ENCODE measurements at regions of chr14 and their contacts with region 1.

Region 1: DNA sequence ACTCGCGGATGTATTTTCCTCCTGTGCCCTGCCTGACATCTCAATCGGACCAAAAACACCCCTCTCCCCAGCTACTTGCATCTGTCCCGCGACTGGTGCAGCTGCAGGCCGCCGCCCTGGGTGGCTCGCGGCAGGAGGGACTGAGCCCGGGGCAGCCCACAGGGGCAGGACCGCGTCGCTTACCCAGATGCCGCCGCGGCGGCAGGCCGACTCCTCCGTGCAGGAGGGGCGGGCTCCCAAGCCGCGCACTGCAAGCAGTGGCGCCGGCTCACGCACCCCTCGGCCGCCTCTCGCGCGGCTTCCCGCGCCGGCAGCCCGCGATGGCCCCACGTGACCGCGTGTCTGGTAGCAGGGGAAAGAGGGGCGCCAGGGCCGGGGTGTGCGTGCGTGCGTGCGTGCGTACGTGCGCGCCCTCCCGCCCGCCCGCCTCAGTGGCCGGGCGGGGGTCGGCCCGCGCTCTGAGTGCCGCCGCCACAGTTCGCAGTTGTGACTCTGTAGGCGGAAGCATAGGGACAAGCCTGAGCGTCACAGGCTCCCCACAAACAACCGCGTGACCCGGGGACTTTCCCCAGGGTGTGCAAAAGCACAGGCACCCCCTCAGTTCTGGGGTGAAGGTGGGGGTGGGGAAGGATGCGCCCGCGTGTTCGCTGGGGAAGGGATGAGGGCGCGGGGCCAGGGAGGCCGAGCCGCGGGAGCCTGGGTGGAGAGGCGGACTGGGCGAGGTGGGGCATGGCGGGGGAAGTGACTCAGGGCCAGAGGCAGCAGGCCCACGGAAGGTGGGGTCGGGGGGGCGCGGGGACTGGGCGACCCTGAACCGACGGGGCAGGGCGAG is at the start of gene ZBTB25:
- DNase-seq: no peak
- ATAC-seq: peak; percentile 83
- H3K4me3 ChIP-seq: peak within 1 kb of the TSS; percentile 83 to 94
- H3K27ac ChIP-seq: peak within 1 kb of the TSS; percentile 94
- H3K4me1 ChIP-seq: peaks cover 35% of the 10 kb centered on the region
- H3K27me3 ChIP-seq: no peaks in the 10 kb centered on the region
- CTCF ChIP-seq: no peak
- total RNA-seq, gene ZBTB25: 9.0 TPM

Region 2: DNA sequence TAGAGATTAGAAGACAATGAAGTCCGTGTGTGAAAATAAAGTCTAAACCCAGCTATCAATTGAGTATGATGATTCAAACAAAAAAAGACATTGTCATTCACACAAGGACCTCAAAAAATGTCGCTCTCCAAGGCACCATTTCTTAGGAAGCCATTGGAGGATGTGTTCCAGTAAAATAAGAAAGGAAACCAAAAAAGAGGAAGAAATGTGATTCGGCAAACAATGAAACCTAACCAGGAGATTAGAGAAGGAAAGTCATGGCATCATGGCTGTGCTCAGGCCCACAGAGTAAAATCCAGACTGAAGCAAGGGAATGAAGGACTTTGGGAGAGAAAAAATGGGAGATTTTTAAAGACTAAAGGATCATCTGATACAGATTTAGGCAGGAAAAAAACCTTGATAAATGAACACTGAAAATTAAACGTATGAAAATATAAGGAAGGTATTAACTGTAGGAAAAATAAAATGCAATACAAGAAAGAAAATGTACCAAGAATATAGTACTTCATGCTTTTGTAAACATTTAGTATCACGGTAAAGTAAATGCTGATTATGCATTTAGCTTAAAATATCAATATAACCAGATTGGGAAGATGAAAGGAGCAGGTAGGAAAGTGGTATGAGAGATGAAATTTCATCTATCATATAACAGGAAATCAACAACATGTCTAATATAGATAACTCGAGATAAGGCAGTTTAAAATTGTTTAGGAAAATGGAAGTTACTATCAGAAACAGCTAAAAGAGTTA is 153.8 kb before region 1 on chr14:
- CTCF ChIA-PET with region 1: no interaction called
- POLR2A ChIA-PET with region 1: interaction called, 14 read pairs
- in situ Hi-C with region 1: no loop called
- intact Hi-C with region 1: no loop called
- DNase-seq: no peak
- ATAC-seq: no peak
- H3K4me3 ChIP-seq: no peak overlapping the region
- H3K27ac ChIP-seq: no peak overlapping the region
- H3K4me1 ChIP-seq: no peaks in the 10 kb centered on the region
- H3K27me3 ChIP-seq: no peaks in the 10 kb centered on the region
- CTCF ChIP-seq: no peak